ENCODE measurements at regions of chr3 and their contacts with region 1.

Region 1: GRCh38 chr3:156554842-156555687 is at the start of gene SSR3:
- DNase-seq: peak; percentile 99
- H3K4me3 ChIP-seq: peak within 1 kb of the TSS; percentile 96
- H3K27ac ChIP-seq: peak within 1 kb of the TSS; percentile 28
- H3K4me1 ChIP-seq: peaks cover 11% of the 10 kb centered on the region
- CTCF ChIP-seq: no peak
- total RNA-seq, gene SSR3: 61.2 and 63.3 TPM in 2 replicates

Region 2: GRCh38 chr3:156396851-156397250 is 158.2 kb before region 1 on chr3:
- CTCF ChIA-PET with region 1: no interaction called
- POLR2A ChIA-PET with region 1: no interaction called
- intact Hi-C with region 1: no loop called
- DNase-seq: no peak
- H3K4me3 ChIP-seq: no peak overlapping the region
- H3K27ac ChIP-seq: no peak overlapping the region
- H3K4me1 ChIP-seq: no peaks in the 10 kb centered on the region
- CTCF ChIP-seq: no peak

Region 3: DNA sequence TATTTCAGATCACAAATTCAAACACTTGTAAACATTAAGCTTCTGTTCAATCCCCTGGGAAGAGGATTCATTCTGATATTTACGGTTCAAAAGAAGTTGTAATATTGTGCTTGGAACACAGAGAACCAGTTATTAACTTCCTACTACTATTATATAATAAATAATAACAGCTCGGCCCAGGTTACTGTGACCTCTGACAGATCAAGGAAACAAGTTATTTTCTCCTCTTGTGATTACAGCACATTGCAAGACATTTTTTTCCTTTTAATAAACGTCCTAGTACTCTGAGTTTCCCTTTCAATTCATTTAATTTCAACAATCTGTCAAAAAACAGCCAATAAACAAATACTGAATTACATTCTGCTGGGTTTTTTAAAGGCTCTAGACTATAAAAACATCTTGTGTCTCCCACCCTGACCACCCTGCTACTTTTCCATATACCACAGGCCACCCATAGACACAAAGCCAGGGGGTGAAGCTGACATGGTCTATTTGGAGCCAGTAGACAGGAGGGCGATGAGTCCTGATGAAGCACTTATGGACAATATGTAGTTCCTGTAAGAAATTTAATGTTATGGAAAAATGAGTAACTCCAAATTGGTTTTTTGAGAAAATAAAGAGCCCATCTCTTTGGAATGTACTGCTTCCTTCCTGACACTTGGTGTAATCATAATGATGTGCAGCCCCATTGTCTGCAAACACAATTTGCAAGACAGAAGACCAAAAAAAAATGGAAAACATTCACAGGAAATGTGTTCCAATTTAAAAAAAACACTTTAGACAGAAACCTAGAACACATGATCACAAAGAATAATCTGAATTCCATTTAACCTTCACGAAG is 12.1 kb before region 1 on chr3:
- CTCF ChIA-PET with region 1: no interaction called
- POLR2A ChIA-PET with region 1: interaction called, 14 read pairs
- intact Hi-C with region 1: no loop called
- DNase-seq: no peak
- H3K4me3 ChIP-seq: no peak overlapping the region
- H3K27ac ChIP-seq: no peak overlapping the region
- H3K4me1 ChIP-seq: no peaks in the 10 kb centered on the region
- CTCF ChIP-seq: no peak

Region 4: DNA sequence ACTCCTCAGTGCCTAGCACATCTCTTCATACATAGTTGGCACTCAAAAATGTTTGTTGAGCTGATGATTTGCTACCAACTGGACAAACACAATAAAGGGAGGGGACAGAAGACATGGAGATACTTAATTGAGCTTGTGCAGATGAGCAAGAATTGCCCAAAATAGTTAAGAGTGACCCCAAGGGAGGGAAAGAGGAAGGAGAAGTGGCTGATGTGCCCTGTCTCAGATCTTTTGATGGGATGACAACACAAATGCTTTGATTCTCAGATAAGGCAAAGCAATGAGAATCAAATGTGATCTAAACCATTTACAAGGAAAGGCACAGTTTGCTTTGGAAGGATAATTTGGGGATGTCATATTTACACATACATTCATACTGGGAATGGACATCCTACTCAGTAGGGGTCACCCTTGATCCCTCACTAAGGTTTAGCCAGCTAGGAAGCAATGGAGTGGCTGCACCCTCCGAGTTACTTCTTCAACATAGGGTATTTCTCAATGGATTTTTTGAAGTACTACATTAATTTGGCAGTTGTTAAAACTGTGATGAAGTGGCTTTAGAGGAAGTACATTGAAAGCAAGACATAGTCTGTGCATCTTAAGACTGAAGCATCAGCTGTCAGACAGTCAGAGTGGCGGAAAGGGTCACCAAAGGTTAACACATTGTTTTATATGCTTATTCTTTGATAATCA is 21.7 kb after region 1 on chr3:
- CTCF ChIA-PET with region 1: no interaction called
- POLR2A ChIA-PET with region 1: interaction called, 13 read pairs
- intact Hi-C with region 1: no loop called
- DNase-seq: no peak
- H3K4me3 ChIP-seq: no peak overlapping the region
- H3K27ac ChIP-seq: no peak overlapping the region
- H3K4me1 ChIP-seq: peaks cover 3% of the 10 kb centered on the region
- CTCF ChIP-seq: no peak

Region 5: DNA sequence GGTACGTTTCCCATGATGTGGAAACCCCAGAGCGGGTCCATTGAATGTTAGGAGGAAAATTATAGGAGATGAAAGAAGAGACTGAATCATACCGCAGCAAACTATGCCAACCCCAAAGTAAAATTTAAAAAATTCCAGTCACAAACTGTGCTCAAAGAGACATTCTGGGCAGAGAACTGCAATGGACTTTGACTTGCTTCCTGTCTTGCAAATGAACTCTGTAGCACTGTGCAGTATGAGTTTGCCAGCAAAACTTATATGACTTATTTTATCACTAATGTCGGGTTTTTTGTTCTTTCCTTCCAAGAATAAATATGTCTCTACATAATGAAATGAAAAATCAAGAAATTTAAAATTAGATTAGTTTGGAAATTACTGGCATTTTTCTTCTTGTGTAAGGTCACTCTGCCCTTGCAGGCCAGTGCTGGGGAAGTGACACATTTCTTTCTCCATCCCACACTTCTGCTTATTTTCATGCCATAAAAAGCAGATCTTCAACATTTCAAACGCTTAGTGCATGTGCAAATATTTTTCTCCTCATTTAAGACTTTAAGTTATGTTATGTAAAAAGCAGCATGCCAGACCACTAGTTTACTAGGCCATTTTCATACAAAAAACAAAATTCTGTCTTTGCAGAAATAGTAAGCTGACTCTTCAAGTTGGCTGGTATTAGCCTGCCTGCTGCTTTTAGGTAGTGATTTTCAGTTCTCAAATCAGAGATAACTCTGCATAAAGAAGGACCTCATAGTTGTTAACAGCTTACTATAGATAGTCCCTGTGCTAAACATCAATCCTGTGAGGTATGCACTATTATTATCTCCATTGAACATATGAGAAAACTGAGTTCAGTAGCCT is 32.1 kb after region 1 on chr3:
- CTCF ChIA-PET with region 1: no interaction called
- POLR2A ChIA-PET with region 1: interaction called, 11 read pairs
- intact Hi-C with region 1: no loop called
- DNase-seq: peak; percentile 10
- H3K4me3 ChIP-seq: no peak overlapping the region
- H3K27ac ChIP-seq: peak overlapping the region; percentile 49
- H3K4me1 ChIP-seq: peaks cover 27% of the 10 kb centered on the region
- CTCF ChIP-seq: no peak

Measured in OCI-LY7 (cell line).